Activated T-helper 2 cell treated with anti-CD3 and anti-CD28 coated beads, Interferon-gamma antibody, Interleukin-2, Interleukin-4, amounts not matched to agents 10 μg/mL and 5 μg/mL and 100 μg/mL, durations not matched to agents 14 hours and 24 hours and 36 hours (primary cell): ENCODE measurements at regions of chr3 and their contacts with region 1.

Region 1: GRCh38 chr3:49411968-49412631 is at the starts of genes RHOA and TCTA:
- DNase-seq: peak; percentile 99
- H3K4me3 Mint-ChIP-seq: peak within 1 kb of the TSS; percentile 93
- H3K27ac Mint-ChIP-seq: peak within 1 kb of the TSS; percentile 90
- H3K4me1 Mint-ChIP-seq: peaks cover 54% of the 10 kb centered on the region
- H3K27me3 Mint-ChIP-seq: no peaks in the 10 kb centered on the region
- total RNA-seq, gene RHOA: 425 and 428 TPM in 2 replicates
- total RNA-seq, gene TCTA: 18.9 and 19.4 TPM in 2 replicates

Region 2: GRCh38 chr3:49021813-49022687 is 390.1 kb before region 1 on chr3 and contains the start of gene NDUFAF3:
- intact Hi-C with region 1: loop called (anchors 10 kb)
- DNase-seq: peak; percentile 91
- H3K4me3 Mint-ChIP-seq: peak within 1 kb of the TSS; percentile 95
- H3K27ac Mint-ChIP-seq: peak within 1 kb of the TSS; percentile 96
- H3K4me1 Mint-ChIP-seq: peaks cover 29% of the 10 kb centered on the region
- H3K27me3 Mint-ChIP-seq: no peaks in the 10 kb centered on the region
- total RNA-seq, gene NDUFAF3: 118 and 120 TPM in 2 replicates

Region 3: DNA sequence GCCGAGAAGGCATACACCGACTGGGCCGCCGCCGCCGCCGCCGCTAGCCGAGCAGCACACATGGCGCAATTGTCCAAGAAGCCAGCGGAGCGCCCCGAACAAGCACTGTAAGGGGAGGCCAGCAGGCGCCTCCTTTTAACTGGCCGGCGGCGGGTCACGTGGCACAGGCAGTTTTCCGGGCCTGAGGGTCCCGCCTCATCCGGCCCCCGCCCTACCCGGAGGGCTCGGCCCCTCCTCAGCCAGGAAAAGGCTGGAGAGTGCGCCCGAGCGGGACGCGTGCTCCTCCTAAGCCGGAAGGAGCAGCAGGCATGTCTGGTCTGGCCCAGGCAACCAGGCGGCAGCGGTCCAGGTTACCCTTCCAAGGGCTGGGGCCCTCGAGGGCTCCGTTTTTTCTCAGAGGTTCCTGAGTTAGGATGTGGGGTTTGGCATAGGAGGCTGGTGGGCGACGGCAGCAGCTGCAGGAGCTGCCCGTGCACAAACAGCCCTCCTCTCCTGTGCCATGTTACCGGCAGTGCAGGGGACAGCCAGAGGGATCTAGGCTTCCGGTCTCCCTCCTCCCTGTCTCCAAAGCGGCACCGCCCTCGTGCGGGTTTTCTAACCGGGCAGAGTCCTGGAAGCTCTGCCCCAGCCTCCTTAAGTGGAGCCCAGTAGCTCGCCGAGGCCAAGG is 53.8 kb before region 1 on chr3 and contains the start of gene GPX1:
- intact Hi-C with region 1: loop called (anchors 2 kb)
- DNase-seq: peak; percentile 82
- H3K4me3 Mint-ChIP-seq: peak within 1 kb of the TSS; percentile 97
- H3K27ac Mint-ChIP-seq: peak within 1 kb of the TSS; percentile 88
- H3K4me1 Mint-ChIP-seq: peaks cover 17% of the 10 kb centered on the region
- H3K27me3 Mint-ChIP-seq: no peaks in the 10 kb centered on the region
- total RNA-seq, gene GPX1: 168 and 173 TPM in 2 replicates

Region 4: GRCh38 chr3:49454458-49454857 is 42.4 kb after region 1 on chr3:
- intact Hi-C with region 1: loop called (anchors 1 kb)
- DNase-seq: no peak
- H3K4me3 Mint-ChIP-seq: no peak overlapping the region
- H3K27ac Mint-ChIP-seq: no peak overlapping the region
- H3K4me1 Mint-ChIP-seq: no peaks in the 10 kb centered on the region
- H3K27me3 Mint-ChIP-seq: no peaks in the 10 kb centered on the region

Region 5: DNA sequence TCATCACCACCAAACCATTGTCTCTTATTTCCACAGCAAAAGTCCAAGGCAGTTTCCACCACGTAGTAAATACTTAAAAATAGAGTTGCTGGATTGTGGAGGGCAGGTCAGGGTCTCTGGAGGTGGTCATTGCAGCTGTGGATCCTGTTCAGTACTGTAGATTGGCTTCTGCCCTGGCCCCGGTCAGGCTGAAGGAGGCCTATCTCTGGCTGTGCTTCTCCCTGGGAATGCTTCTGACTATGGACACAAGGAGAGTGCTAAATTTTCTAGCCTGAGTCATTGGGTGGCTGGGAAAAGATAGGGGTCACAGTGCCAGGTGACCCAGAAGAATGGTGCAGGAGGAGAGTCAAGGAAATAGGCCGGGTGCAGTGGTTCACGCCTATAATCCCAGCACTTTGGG is 338.0 kb after region 1 on chr3:
- intact Hi-C with region 1: no loop called
- DNase-seq: no peak
- H3K4me3 Mint-ChIP-seq: no peak overlapping the region
- H3K27ac Mint-ChIP-seq: no peak overlapping the region
- H3K4me1 Mint-ChIP-seq: peaks cover under 1% of the 10 kb centered on the region
- H3K27me3 Mint-ChIP-seq: no peaks in the 10 kb centered on the region

Region 6: DNA sequence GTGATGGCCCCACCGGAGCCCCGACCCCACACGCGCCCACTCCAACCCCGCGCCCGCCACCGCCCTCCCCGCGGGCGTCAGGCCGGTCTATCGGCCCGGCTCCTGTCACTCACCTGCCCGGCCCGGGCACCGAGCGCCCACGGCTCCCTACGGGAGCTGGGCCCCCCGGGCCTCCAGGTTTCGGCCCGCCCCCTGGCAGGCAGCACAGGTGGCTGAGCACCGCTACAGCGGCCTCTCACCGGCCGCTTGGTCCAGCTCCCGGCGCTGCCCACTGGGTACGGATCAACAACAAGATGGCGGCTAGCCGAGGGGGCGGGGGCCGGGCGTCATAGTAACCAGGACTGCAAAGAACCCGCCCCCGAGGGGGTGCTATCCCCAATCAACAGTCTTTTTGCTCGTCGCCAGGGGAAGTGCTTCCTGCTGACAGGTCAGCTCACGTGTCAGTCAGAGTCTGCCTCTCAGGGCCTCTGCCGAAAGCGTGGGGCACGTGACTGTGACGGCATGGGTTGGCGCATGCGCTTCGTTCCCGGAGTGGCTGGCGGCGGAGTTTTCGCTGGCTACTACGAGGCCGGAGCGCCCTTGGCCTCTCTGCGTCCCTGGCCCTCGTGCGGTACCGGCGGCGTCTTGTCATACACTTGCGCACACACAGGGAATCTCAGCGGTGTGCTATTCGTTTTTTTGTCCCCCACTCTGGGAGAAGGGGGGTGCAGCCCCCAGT is 374.3 kb after region 1 on chr3 and contains the start of gene IP6K1:
- intact Hi-C with region 1: loop called (anchors 2 kb)
- DNase-seq: peak; percentile 100
- H3K4me3 Mint-ChIP-seq: peak within 1 kb of the TSS; percentile 90
- H3K27ac Mint-ChIP-seq: peak within 1 kb of the TSS; percentile 95
- H3K4me1 Mint-ChIP-seq: peaks cover 18% of the 10 kb centered on the region
- H3K27me3 Mint-ChIP-seq: no peaks in the 10 kb centered on the region
- total RNA-seq, gene IP6K1: 36.9 and 40.7 TPM in 2 replicates